Endothelial cell of umbilical vein (primary cell): ENCODE measurements at regions of chr19 and their contacts with region 1.

Region 1: DNA sequence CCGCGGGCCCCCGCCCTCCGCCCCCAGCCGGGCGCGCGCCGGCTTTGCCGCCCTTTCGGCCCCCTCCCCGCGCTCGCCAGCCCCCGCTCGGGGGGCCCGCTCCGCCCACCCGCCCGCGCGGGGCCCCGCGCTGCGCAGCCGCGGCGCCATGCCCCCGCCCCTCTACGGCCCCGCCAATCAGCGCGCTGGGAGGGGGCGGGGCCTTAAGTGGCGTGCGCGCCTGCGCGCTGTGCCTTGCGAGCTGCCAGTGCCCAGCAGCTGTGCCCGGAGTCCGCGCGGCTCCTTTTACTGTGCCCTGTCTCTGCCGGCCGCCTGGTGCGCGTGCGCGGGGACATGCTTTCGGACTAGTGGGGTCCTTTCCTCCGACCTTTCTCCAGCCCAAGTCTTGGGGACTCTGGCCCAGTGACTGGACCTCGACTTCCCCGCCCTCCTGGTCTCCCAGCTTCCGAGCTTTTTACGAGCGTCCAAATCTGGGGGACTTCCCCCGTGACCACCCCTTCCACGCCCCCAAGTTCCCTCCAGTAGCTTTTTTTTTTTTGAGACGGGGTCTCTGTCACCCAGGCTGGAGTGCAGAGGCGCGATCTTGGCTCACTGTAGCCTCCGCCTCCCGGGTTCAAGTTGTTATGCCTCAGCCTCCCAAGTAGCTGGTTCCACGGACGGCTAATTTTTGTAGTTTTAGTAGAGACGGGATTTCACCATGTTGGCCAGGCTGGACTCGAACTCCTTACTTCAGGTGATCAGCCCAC is at the start of gene MBD3:
- DNase-seq: peak; percentile 89
- H3K4me3 ChIP-seq: peak within 1 kb of the TSS; percentile 89 to 99 (median 99)
- H3K27ac ChIP-seq: peak within 1 kb of the TSS; percentile 88
- H3K4me1 ChIP-seq: peaks cover 15% of the 10 kb centered on the region
- H3K27me3 ChIP-seq: no peaks in the 10 kb centered on the region
- CTCF ChIP-seq: no peak
- POLR2A ChIP-seq: peak; percentile 75
- total RNA-seq, gene MBD3: 120 and 121 TPM in 2 replicates

Region 2: DNA sequence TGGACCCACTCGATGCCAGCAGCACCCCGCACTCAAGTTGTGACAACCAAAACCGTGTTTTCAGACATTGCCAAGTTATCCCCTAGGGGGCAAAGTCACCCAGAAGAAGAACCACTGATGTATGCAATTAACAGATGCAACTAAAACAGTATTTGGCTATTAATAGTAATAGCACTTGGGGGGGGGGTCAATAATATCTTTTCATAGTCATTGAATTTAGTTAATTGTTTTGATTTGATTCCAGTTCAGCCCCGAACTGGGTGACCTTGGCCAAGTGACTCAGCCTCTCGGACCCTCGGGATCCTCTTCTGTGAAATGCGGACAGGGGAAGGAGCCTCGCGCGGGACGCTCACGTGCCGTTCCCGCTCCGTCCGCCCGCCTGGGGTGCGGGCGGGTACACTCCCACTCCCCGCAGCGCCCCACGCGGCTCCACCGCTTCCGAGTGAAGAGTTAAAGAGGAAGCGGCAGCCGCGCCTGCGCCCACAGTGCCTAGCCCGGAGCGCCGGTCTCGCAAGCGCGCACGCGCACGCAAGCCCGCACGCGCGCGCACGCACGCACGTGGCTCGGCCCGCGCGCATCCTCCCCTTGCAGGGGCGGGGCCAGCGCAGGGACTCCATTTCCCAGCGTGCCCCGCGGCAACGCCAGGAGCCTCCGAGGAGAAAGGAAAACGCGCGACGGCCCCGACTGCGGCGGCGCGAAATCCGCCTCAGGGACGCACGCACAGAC is 186.0 kb before region 1 on chr19:
- CTCF ChIA-PET with region 1: no interaction called
- POLR2A ChIA-PET with region 1: no interaction called
- dilution Hi-C with region 1: no loop called
- intact Hi-C with region 1: loop called (anchors 10 kb)
- DNase-seq: peak; percentile 99
- H3K4me3 ChIP-seq: peak overlapping the region; percentile 53 to 61 (median 57)
- H3K27ac ChIP-seq: peak overlapping the region; percentile 42
- H3K4me1 ChIP-seq: peaks cover 26% of the 10 kb centered on the region
- H3K27me3 ChIP-seq: no peaks in the 10 kb centered on the region
- CTCF ChIP-seq: peak in 1 of 2 donors; percentile 55
- POLR2A ChIP-seq: peak; percentile 81

Region 3: DNA sequence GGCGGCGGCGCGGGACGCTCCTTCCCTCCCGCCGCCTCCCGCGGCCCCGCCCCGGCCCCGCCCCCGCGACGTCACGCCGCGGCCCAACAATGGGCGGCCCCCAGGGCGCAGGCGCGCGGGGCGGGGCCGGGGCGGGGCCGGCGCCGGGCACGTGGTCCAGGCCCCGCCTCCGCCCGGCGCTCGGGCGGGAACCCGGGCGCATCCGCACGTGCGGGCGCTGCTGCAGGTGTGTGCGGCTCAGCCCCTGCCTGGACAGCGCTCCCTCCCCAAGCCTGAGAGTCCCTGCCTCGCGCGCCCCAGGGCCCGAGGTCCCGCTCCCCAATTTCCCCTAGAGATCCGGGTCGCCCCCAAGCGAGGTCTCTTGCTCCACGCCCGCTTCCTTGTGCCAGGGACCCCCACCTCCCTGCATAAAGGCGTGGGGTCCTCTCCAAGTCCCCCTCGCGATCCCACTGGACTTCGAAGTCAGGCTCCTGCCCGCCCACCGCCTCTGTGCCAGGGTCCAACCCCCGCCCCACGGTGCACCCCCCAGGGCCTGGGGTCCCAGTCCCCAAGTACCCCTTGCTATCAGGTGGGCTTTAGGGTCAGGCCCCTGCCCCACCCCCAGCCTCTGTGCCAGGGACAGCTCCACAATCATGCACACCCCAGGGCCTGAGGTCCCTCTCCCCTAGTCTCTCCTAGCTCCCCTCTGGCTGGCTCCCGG is 24.5 kb before region 1 on chr19 and contains the start of gene MEX3D:
- CTCF ChIA-PET with region 1: interaction called, 4 read pairs
- POLR2A ChIA-PET with region 1: interaction called, 6 read pairs
- dilution Hi-C with region 1: no loop called
- intact Hi-C with region 1: loop called (anchors 2 kb)
- DNase-seq: peak; percentile 23
- H3K4me3 ChIP-seq: peak within 1 kb of the TSS; percentile 81 to 99 (median 95)
- H3K27ac ChIP-seq: peak within 1 kb of the TSS; percentile 96
- H3K4me1 ChIP-seq: peaks cover 8% of the 10 kb centered on the region
- H3K27me3 ChIP-seq: peaks cover 0 to 6% of the 10 kb centered on the region in 2 experiments
- CTCF ChIP-seq: no peak
- POLR2A ChIP-seq: no peak
- total RNA-seq, gene MEX3D: 96.7 and 98.5 TPM in 2 replicates

Region 4: GRCh38 chr19:1652471-1653299 is 59.8 kb after region 1 on chr19 and contains the start of gene TCF3:
- CTCF ChIA-PET with region 1: no interaction called
- POLR2A ChIA-PET with region 1: no interaction called
- dilution Hi-C with region 1: no loop called
- intact Hi-C with region 1: no loop called
- DNase-seq: peak; percentile 99
- H3K4me3 ChIP-seq: peak within 1 kb of the TSS; percentile 45 to 89 (median 62)
- H3K27ac ChIP-seq: peak within 1 kb of the TSS; percentile 98
- H3K4me1 ChIP-seq: peaks cover 2% of the 10 kb centered on the region
- H3K27me3 ChIP-seq: no peaks in the 10 kb centered on the region
- CTCF ChIP-seq: no peak
- POLR2A ChIP-seq: peak; percentile 28
- total RNA-seq, gene TCF3: 193 and 197 TPM in 2 replicates